ENCODE measurements at regions of chr6 and their contacts with region 1.

Region 1: GRCh38 chr6:108113557-108114519 is 39.3 kb upstream of the OSTM1 start:
- DNase-seq: peak; percentile 23 to 27
- H3K4me3 ChIP-seq: no peak overlapping the region
- H3K27ac ChIP-seq: no peak overlapping the region
- H3K4me1 ChIP-seq: peaks cover 17 to 31% of the 10 kb centered on the region in 2 donors
- H3K27me3 ChIP-seq: no peaks in the 10 kb centered on the region
- CTCF ChIP-seq: peak in 5 of 6 experiments; percentile 48 to 80 (median 56)
- POLR2A ChIP-seq: no peak

Region 2: GRCh38 chr6:107941627-107942026 is 172.2 kb before region 1 on chr6:
- intact Hi-C with region 1: no loop called
- DNase-seq: peak; percentile 38 to 42
- H3K4me3 ChIP-seq: no peak overlapping the region
- H3K27ac ChIP-seq: peak overlapping the region in 2 of 3 donors; percentile 1 to 40
- H3K4me1 ChIP-seq: peaks cover 41 to 44% of the 10 kb centered on the region in 2 donors
- H3K27me3 ChIP-seq: no peaks in the 10 kb centered on the region
- CTCF ChIP-seq: no peak
- POLR2A ChIP-seq: no peak

Region 3: DNA sequence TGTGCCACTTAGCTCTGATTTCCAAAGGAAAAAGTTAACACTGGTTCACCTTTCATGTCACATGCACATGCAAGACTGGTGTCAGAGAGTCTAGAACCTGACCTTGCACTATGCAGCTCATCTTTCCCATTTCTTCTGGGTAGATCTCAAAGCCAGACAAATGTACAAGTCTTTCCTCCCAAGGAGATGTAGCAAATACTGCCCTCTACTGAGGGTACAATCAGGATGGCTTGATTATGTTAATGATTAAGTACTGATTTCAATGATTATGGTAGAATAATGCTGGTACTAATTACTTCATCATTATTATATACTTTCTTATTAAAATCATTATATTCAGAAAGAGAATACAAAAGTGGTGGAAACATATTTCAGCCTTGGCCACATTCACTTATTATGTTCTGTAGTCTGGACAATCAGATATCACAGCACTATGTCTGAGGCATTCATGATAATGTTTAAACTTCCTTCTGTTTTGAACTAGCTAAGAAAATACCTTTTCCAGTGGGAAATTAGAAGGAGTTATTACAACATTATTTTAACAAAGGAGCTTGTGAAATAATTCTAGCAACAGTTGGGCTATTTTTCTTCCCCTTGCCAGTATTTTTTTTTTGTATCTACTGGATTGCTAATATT is 378.4 kb after region 1 on chr6:
- intact Hi-C with region 1: loop called (anchors 5 kb)
- DNase-seq: no peak
- H3K4me3 ChIP-seq: no peak overlapping the region
- H3K27ac ChIP-seq: no peak overlapping the region
- H3K4me1 ChIP-seq: no peaks in the 10 kb centered on the region
- H3K27me3 ChIP-seq: no peaks in the 10 kb centered on the region
- CTCF ChIP-seq: peak in 4 of 6 experiments; percentile 37 to 71 (median 62)
- POLR2A ChIP-seq: no peak

Region 4: GRCh38 chr6:108526739-108527174 is 412.9 kb after region 1 on chr6:
- intact Hi-C with region 1: loop called (anchors 10 kb)
- DNase-seq: no peak
- H3K4me3 ChIP-seq: no peak overlapping the region
- H3K27ac ChIP-seq: no peak overlapping the region
- H3K4me1 ChIP-seq: no peaks in the 10 kb centered on the region
- H3K27me3 ChIP-seq: no peaks in the 10 kb centered on the region
- CTCF ChIP-seq: peak; percentile 59 to 85 (median 84)
- POLR2A ChIP-seq: no peak

Measured in thyroid gland (tissue), 4 donors.